ENCODE measurements at regions of chr13 and their contacts with region 1.

Region 1: GRCh38 chr13:99356158-99357091 is 49.2 kb upstream of the GPR183 start:
- DNase-seq: peak; percentile 88 to 95 (median 92)
- H3K4me3 ChIP-seq: peak overlapping the region; percentile 13 to 37
- H3K4me3 Mint-ChIP-seq: peak overlapping the region; percentile 30 to 82 (median 73)
- H3K27ac ChIP-seq: peak overlapping the region; percentile 94
- H3K27ac Mint-ChIP-seq: peak overlapping the region; percentile 96 to 100 (median 99)
- H3K4me1 ChIP-seq: peaks cover 98% of the 10 kb centered on the region
- H3K4me1 Mint-ChIP-seq: peaks cover 90 to 100% (median 96%) of the 10 kb centered on the region in 4 donors
- H3K27me3 ChIP-seq: no peaks in the 10 kb centered on the region
- H3K27me3 Mint-ChIP-seq: no peaks in the 10 kb centered on the region

Region 2: GRCh38 chr13:99281811-99282263 is 74.6 kb before region 1 on chr13:
- CTCF ChIA-PET with region 1: interaction called, 15 read pairs
- POLR2A ChIA-PET with region 1: interaction called, 95 read pairs
- intact Hi-C with region 1: loop called (anchors 2 kb)
- DNase-seq: peak; percentile 65 to 79 (median 74)
- H3K4me3 ChIP-seq: peak overlapping the region in 1 of 2 donors; percentile 16
- H3K4me3 Mint-ChIP-seq: peak overlapping the region; percentile 67 to 92 (median 82)
- H3K27ac ChIP-seq: peak overlapping the region; percentile 66
- H3K27ac Mint-ChIP-seq: peak overlapping the region; percentile 88 to 100 (median 99)
- H3K4me1 ChIP-seq: peaks cover 96% of the 10 kb centered on the region
- H3K4me1 Mint-ChIP-seq: peaks cover 77 to 99% (median 88%) of the 10 kb centered on the region in 4 donors
- H3K27me3 ChIP-seq: no peaks in the 10 kb centered on the region
- H3K27me3 Mint-ChIP-seq: no peaks in the 10 kb centered on the region

Region 3: GRCh38 chr13:99322297-99323103 is 33.9 kb before region 1 on chr13:
- CTCF ChIA-PET with region 1: interaction called, 9 read pairs
- POLR2A ChIA-PET with region 1: interaction called, 417 read pairs
- intact Hi-C with region 1: loop called (anchors 1 kb)
- DNase-seq: peak; percentile 63 to 72 (median 68)
- H3K4me3 ChIP-seq: peak overlapping the region in 1 of 2 donors; percentile 5
- H3K4me3 Mint-ChIP-seq: peak overlapping the region; percentile 20 to 82 (median 68)
- H3K27ac ChIP-seq: peak overlapping the region; percentile 79
- H3K27ac Mint-ChIP-seq: peak overlapping the region; percentile 91 to 99 (median 94)
- H3K4me1 ChIP-seq: peaks cover 87% of the 10 kb centered on the region
- H3K4me1 Mint-ChIP-seq: peaks cover 54 to 84% (median 69%) of the 10 kb centered on the region in 4 donors
- H3K27me3 ChIP-seq: no peaks in the 10 kb centered on the region
- H3K27me3 Mint-ChIP-seq: no peaks in the 10 kb centered on the region

Region 4: GRCh38 chr13:99339736-99340397 is 16.6 kb before region 1 on chr13:
- CTCF ChIA-PET with region 1: interaction called, 38 read pairs
- POLR2A ChIA-PET with region 1: interaction called, 205 read pairs
- intact Hi-C with region 1: loop called (anchors 1 kb)
- DNase-seq: peak; percentile 71 to 86 (median 76)
- H3K4me3 ChIP-seq: peak overlapping the region; percentile 4 to 37
- H3K4me3 Mint-ChIP-seq: peak overlapping the region; percentile 68 to 91 (median 85)
- H3K27ac ChIP-seq: peak overlapping the region; percentile 47
- H3K27ac Mint-ChIP-seq: peak overlapping the region; percentile 76 to 94 (median 91)
- H3K4me1 ChIP-seq: peaks cover 86% of the 10 kb centered on the region
- H3K4me1 Mint-ChIP-seq: peaks cover 71 to 97% (median 83%) of the 10 kb centered on the region in 4 donors
- H3K27me3 ChIP-seq: no peaks in the 10 kb centered on the region
- H3K27me3 Mint-ChIP-seq: no peaks in the 10 kb centered on the region

Region 5: GRCh38 chr13:99380921-99381645 is 24.7 kb after region 1 on chr13:
- CTCF ChIA-PET with region 1: interaction called, 46 read pairs
- POLR2A ChIA-PET with region 1: interaction called, 235 read pairs
- intact Hi-C with region 1: loop called (anchors 1 kb)
- DNase-seq: peak in 4 of 5 donors; percentile 52 to 67 (median 61)
- H3K4me3 ChIP-seq: peak overlapping the region in 1 of 2 donors; percentile 0
- H3K4me3 Mint-ChIP-seq: peak overlapping the region in 7 of 8 donors; percentile 61 to 89 (median 73)
- H3K27ac ChIP-seq: peak overlapping the region; percentile 51
- H3K27ac Mint-ChIP-seq: peak overlapping the region; percentile 92 to 99 (median 96)
- H3K4me1 ChIP-seq: peaks cover 87% of the 10 kb centered on the region
- H3K4me1 Mint-ChIP-seq: peaks cover 70 to 97% (median 87%) of the 10 kb centered on the region in 4 donors
- H3K27me3 ChIP-seq: no peaks in the 10 kb centered on the region
- H3K27me3 Mint-ChIP-seq: no peaks in the 10 kb centered on the region